ENCODE measurements at regions of chr5 and their contacts with region 1.

Region 1: GRCh38 chr5:126776497-126777256 is at the start of gene LMNB1:
- DNase-seq: peak; percentile 96
- H3K4me3 Mint-ChIP-seq: peak within 1 kb of the TSS; percentile 94
- H3K27ac Mint-ChIP-seq: peak within 1 kb of the TSS; percentile 97
- H3K4me1 Mint-ChIP-seq: peaks cover 16% of the 10 kb centered on the region
- H3K27me3 Mint-ChIP-seq: no peaks in the 10 kb centered on the region
- total RNA-seq, gene LMNB1: 232 and 239 TPM in 2 replicates

Region 2: DNA sequence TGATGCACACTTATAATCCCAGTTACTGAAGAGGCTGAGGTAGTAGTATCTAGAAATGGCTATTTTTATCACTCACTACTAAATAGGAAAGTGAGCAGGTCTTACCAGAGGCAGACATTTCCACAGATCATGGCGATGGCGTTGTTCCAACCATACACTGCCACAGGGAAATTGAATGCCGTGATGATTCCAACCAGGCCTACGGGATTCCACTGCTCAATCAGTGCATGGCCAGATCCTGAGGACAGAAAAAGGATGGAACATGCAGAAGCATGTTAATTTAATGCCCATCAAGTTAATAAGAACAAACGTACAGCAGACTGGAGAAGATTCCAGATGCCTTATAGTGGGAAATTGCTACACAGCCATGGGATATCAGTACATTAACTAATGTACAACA is 199.7 kb before region 1 on chr5:
- intact Hi-C with region 1: no loop called
- DNase-seq: no peak
- H3K4me3 Mint-ChIP-seq: no peak overlapping the region
- H3K27ac Mint-ChIP-seq: no peak overlapping the region
- H3K4me1 Mint-ChIP-seq: no peaks in the 10 kb centered on the region
- H3K27me3 Mint-ChIP-seq: no peaks in the 10 kb centered on the region

Region 3: GRCh38 chr5:126600631-126601511 is 175.8 kb before region 1 on chr5 and contains the start of gene PHAX:
- intact Hi-C with region 1: loop called (anchors 1 kb)
- DNase-seq: peak; percentile 64
- H3K4me3 Mint-ChIP-seq: peak within 1 kb of the TSS; percentile 94
- H3K27ac Mint-ChIP-seq: peak within 1 kb of the TSS; percentile 95
- H3K4me1 Mint-ChIP-seq: peaks cover 22% of the 10 kb centered on the region
- H3K27me3 Mint-ChIP-seq: peaks cover 2% of the 10 kb centered on the region
- total RNA-seq, gene PHAX: 45.3 and 47.7 TPM in 2 replicates

Region 4: DNA sequence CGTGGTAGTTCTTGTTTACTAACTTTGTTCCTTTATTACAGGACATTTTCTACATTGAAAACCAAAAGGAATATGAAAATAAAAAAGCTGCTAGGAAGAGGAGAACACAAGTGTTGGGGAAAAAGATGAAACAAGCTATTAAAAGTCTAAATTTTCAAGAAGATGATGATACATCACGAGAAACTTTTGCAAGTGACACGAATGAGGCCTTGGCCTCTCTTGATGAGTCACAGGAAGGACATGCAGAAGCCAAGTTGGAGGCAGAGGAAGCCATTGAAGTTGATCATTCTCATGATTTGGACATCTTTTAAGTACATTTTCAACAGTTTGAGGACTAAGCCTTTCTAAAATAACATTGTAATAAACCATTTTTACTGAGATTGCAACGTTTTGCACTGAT is 152.1 kb before region 1 on chr5:
- intact Hi-C with region 1: no loop called
- DNase-seq: no peak
- H3K4me3 Mint-ChIP-seq: no peak overlapping the region
- H3K27ac Mint-ChIP-seq: peak overlapping the region; percentile 75
- H3K4me1 Mint-ChIP-seq: peaks cover 7% of the 10 kb centered on the region
- H3K27me3 Mint-ChIP-seq: no peaks in the 10 kb centered on the region

Region 5: GRCh38 chr5:126686451-126687126 is 90.1 kb before region 1 on chr5:
- intact Hi-C with region 1: no loop called
- DNase-seq: no peak
- H3K4me3 Mint-ChIP-seq: no peak overlapping the region
- H3K27ac Mint-ChIP-seq: peak overlapping the region; percentile 47
- H3K4me1 Mint-ChIP-seq: peaks cover 25% of the 10 kb centered on the region
- H3K27me3 Mint-ChIP-seq: no peaks in the 10 kb centered on the region

Region 6: DNA sequence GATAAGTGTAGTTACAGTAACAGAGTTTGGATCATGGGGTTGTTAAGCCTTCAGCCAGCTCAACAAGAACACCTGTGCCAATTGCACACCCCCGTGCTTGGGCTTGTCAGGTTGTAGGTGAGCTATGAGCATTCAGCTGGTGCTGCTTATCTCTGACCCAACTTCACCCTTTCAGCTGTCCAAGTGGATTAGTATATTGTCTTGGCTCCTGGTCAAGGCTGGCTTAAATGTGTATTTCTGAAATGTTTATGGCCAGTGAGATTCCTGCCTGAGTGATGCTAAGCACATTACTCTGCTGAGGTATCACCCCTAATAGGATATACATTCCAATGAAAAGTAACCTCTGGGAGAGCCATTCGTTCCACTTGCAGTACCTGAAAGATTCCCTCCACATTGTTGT is 44.0 kb before region 1 on chr5:
- intact Hi-C with region 1: loop called (anchors 5 kb)
- DNase-seq: no peak
- H3K4me3 Mint-ChIP-seq: no peak overlapping the region
- H3K27ac Mint-ChIP-seq: no peak overlapping the region
- H3K4me1 Mint-ChIP-seq: peaks cover 13% of the 10 kb centered on the region
- H3K27me3 Mint-ChIP-seq: peaks cover under 1% of the 10 kb centered on the region

Region 7: GRCh38 chr5:126757713-126758357 is 18.8 kb before region 1 on chr5:
- intact Hi-C with region 1: loop called (anchors 1 kb)
- DNase-seq: no peak
- H3K4me3 Mint-ChIP-seq: peak overlapping the region; percentile 66
- H3K27ac Mint-ChIP-seq: peak overlapping the region; percentile 95
- H3K4me1 Mint-ChIP-seq: peaks cover 38% of the 10 kb centered on the region
- H3K27me3 Mint-ChIP-seq: no peaks in the 10 kb centered on the region

Region 8: DNA sequence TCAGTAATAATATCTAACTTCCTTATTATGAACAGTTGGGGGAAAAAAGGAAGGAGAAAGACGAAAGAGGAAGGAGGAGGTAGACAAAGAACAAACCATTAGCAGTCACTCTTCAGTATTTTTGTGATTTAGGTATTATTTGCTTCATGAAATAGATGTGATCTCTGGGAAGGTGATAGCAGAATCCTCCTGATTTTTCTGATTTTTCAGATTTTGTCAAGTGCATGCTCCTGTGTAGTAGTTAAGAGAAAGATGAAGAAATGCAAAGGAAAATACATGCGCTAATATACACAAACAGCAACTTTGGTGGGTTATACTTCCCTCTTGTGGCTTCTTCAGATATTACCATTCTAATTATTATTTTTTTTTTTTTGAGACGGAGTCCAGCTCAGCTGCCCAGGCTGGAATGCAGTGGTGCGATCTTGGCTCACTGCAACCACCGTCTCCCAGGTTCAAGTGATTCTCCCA is 31.9 kb after region 1 on chr5:
- intact Hi-C with region 1: loop called (anchors 1 kb)
- DNase-seq: no peak
- H3K4me3 Mint-ChIP-seq: no peak overlapping the region
- H3K27ac Mint-ChIP-seq: peak overlapping the region; percentile 39
- H3K4me1 Mint-ChIP-seq: peaks cover 43% of the 10 kb centered on the region
- H3K27me3 Mint-ChIP-seq: no peaks in the 10 kb centered on the region

Region 9: GRCh38 chr5:127517480-127518318 is 741.0 kb after region 1 on chr5 and contains the start of gene PRRC1:
- intact Hi-C with region 1: loop called (anchors 1 kb)
- DNase-seq: peak; percentile 73
- H3K4me3 Mint-ChIP-seq: peak within 1 kb of the TSS; percentile 85
- H3K27ac Mint-ChIP-seq: peak within 1 kb of the TSS; percentile 75
- H3K4me1 Mint-ChIP-seq: peaks cover 23% of the 10 kb centered on the region
- H3K27me3 Mint-ChIP-seq: peaks cover 11% of the 10 kb centered on the region
- total RNA-seq, gene PRRC1: 53.5 and 56.9 TPM in 2 replicates